ENCODE measurements at regions of chr9 and their contacts with region 1.

Region 1: GRCh38 chr9:79571309-79572031 is at the start of gene TLE4:
- DNase-seq: peak; percentile 100
- H3K4me3 ChIP-seq: peak within 1 kb of the TSS; percentile 87
- H3K27me3 ChIP-seq: no peaks in the 10 kb centered on the region
- CTCF ChIP-seq: no peak
- polyA plus RNA-seq, gene TLE4: 152 and 154 TPM in 2 replicates

Region 2: GRCh38 chr9:78620764-78621163 is 950.7 kb before region 1 on chr9:
- CTCF ChIA-PET with region 1: no interaction called
- POLR2A ChIA-PET with region 1: interaction called, 16 read pairs
- DNase-seq: peak; percentile 49
- H3K4me3 ChIP-seq: no peak overlapping the region
- H3K27me3 ChIP-seq: no peaks in the 10 kb centered on the region
- CTCF ChIP-seq: no peak

Region 3: GRCh38 chr9:79131824-79132377 is 439.6 kb before region 1 on chr9:
- CTCF ChIA-PET with region 1: interaction called, 5 read pairs
- POLR2A ChIA-PET with region 1: interaction called, 10 read pairs
- DNase-seq: no peak
- H3K4me3 ChIP-seq: no peak overlapping the region
- H3K27me3 ChIP-seq: no peaks in the 10 kb centered on the region
- CTCF ChIP-seq: no peak

Region 4: DNA sequence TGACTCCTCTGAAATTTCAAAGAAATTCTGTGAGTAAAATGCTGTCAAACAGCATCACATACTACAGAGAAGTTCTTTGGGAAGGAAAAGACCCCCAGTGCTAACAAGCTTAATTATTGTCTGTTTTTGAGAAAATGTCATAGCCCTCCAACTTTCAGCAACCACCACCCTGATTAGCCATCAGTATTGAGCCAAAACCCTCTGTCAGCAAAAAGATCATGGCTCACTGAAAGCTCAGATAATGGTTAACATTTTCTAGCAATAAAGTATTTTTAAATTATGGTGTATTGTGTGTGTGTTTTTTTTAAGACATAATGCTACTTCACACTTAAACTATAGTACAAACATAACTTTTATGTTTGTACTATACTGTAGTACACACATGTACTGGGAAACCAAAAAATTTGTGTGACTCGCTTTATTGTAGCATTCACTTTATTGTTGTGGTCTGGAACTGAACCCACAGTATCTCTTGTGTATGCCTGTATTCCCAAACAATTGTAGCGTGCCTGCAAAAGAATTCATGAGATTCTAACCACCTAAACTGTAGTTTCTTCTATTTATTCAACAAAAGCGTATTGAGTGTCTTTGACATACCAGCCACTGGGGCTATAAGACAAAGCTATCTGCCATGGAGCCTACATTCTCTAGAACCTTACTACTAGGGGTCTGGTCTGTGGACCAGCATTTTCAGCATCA is 31.9 kb after region 1 on chr9:
- CTCF ChIA-PET with region 1: no interaction called
- POLR2A ChIA-PET with region 1: no interaction called
- DNase-seq: no peak
- H3K4me3 ChIP-seq: no peak overlapping the region
- H3K27me3 ChIP-seq: no peaks in the 10 kb centered on the region
- CTCF ChIP-seq: no peak

Measured in BJ (cell line).